ENCODE measurements at regions of chr18 and their contacts with region 1.

Region 1: GRCh38 chr18:33711514-33711913 is 133.5 kb downstream of the ASXL3 start:
- DNase-seq: no peak
- ATAC-seq: peak; percentile 51

Region 2: DNA sequence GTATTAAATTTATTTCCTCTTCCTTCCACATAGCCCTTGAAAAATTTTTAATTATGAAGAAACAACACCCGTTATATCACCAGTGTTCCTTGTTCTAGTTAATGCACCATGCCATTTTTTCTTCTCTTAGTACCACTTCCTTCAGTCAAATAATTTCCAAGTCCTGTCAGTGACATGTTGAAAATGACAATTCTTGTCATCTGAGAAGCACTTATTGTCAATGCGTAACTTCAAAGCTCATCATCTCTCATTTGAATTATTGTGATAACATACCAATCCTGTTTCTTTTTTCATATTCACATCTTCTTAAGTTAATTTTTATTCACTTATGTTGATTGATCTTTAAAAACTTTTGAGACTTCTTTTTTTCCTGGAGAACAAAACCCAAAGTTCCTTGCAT is 186.9 kb after region 1 on chr18:
- intact Hi-C with region 1: loop called (anchors 5 kb)
- DNase-seq: no peak
- ATAC-seq: no peak